Right ventricle myocardium inferior (tissue), 1 donor: ENCODE measurements at regions of chr21 and their contacts with region 1.

Region 1: GRCh38 chr21:36927719-36928117 is 38.8 kb downstream of the HLCS start:
- DNase-seq: peak; percentile 79
- ATAC-seq: peak; percentile 83

Region 2: DNA sequence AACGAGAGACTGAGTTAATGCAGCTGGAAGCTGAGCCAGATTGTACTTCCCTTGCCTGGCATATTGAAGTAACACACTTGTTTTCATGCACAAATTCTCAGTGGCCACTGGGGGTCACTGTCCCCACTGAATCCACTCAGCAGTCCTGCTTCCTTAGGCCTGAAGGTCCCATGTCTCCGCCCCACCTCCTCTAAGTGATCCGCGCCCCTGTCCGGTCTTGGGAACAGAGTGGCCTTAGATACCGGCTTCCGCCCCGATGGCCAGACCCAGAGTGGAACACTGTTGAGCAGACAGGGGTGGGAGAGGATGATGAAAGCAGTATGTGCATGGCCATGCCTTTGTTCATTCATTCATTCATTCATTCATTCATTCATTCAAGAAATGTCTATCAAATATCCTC is 507.7 kb before region 1 on chr21:
- intact Hi-C with region 1: loop called (anchors 5 kb)
- DNase-seq: peak; percentile 83
- ATAC-seq: peak; percentile 91

Region 3: GRCh38 chr21:36504067-36505058 is 423.4 kb before region 1 on chr21:
- intact Hi-C with region 1: loop called (anchors 5 kb)
- DNase-seq: no peak
- ATAC-seq: no peak

Region 4: GRCh38 chr21:36630485-36631206 is 297.1 kb before region 1 on chr21:
- intact Hi-C with region 1: loop called (anchors 2 kb)
- DNase-seq: no peak
- ATAC-seq: no peak

Region 5: GRCh38 chr21:36661511-36662309 is 266.0 kb before region 1 on chr21:
- intact Hi-C with region 1: loop called (anchors 2 kb)
- DNase-seq: no peak
- ATAC-seq: peak; percentile 39